ENCODE measurements at regions of chr15 and their contacts with region 1.

Region 1: DNA sequence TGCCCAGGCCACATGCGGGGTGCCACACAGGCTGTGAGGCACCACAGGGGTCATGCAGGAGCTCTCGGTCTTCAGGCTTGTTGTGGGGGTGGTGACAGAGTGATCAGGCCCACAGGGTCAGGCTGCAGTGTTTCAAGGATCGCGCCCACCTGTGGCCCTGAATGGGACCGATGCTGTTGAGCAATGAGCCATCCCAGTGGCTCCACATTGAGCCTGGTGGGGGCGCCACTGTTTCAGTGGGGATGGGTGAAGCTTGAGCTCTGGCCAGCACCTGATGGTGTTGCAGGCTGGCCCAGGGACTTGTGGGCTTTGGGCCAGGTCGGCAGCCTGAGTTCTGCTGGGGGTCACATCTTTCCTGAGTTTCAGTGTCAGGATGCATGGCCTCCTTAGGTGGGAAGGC is 230.1 kb downstream of the UBE3A start:
- DNase-seq: no peak
- ATAC-seq: no peak
- H3K4me3 ChIP-seq: no peak overlapping the region
- H3K27ac ChIP-seq: no peak overlapping the region
- H3K4me1 ChIP-seq: no peaks in the 10 kb centered on the region
- H3K27me3 ChIP-seq: no peaks in the 10 kb centered on the region
- CTCF ChIP-seq: no peak
- POLR2A ChIP-seq: no peak

Region 2: GRCh38 chr15:25244731-25245585 is 36.2 kb after region 1 on chr15:
- intact Hi-C with region 1: loop called in 1 of 10 experiments (anchors 5 kb)
- DNase-seq: peak in 4 of 5 donors; percentile 4 to 34 (median 4)
- ATAC-seq: no peak
- H3K4me3 ChIP-seq: no peak overlapping the region
- H3K27ac ChIP-seq: no peak overlapping the region
- H3K4me1 ChIP-seq: no peaks in the 10 kb centered on the region
- H3K27me3 ChIP-seq: no peaks in the 10 kb centered on the region
- CTCF ChIP-seq: no peak
- POLR2A ChIP-seq: no peak